Dorsolateral prefrontal cortex (tissue), 120 donors: ENCODE measurements at regions of chr10 and their contacts with region 1.

Region 1: DNA sequence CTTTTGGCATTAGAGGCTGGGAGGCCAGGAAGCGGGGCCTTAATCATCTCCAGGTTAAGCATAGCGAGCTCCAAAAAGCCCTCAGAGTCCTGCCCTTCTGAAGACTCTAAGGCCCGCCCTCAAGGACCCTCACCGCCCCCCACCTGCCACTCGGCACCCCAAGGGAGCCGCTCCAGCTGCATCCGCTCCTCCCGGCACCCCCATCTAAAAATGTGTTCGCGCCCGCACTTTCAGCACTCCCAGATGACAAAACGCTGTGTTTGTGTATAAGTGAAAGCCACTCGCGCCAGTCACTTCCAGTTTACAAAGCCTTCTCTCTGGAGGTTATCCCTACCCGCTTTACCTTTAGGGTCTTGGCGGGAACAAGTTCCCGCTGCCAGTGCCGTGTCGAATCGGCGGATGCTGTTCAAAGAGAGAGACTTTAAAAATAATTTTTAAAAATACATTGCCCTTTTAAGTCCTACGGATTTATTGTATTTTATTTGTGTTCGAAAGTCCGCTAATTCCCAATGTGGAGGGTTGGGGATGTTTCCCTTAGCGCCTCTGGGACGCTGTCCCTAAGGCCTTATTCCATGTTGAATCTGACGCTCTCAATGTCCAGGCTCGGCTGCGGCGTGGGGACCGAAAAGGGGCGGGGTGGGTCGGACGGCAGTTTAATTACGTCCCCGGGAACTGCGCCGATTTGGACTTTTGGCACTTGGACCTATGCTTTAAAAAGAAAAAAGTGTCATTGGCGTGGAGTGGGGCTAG is at the starts of genes DCLRE1A and NHLRC2:
- DNase-seq: peak; percentile 62 to 84 (median 78)
- H3K4me3 ChIP-seq: peak within 1 kb of the TSS; percentile 48 to 99 (median 91)
- H3K27ac ChIP-seq: peak within 1 kb of the TSS; percentile 71 to 97 (median 92)
- H3K27me3 ChIP-seq: no peaks in the 10 kb centered on the region
- CTCF ChIP-seq: peak in 10 of 56 donors; percentile 4 to 34 (median 12)
- total RNA-seq, gene DCLRE1A: 6.8 to 15.0 (median 10.1) TPM
- total RNA-seq, gene NHLRC2: 24.6 to 53.2 (median 33.8) TPM

Region 2: DNA sequence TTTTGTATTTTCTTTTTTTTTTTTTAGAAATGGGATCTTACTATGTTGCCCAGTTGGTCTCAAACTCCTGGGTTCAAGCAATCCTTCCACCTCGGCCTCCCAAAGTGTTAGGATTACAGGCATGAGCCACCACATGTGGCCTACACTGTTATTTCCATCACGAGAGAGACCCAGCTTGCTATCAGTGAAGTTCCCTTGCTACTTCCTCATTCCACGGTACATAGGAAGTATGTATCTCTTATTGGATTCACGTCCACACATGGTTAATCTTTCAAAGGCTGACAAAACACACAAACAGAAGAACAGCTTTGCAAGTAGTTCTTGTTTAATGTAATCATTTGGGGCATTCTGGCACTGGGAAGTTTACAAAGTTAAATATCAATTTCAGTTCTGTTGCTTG is 51.2 kb before region 1 on chr10:
- intact Hi-C with region 1: loop called in 1 of 2 experiments (anchors 5 kb)
- DNase-seq: no peak
- H3K4me3 ChIP-seq: no peak overlapping the region
- H3K27ac ChIP-seq: peak overlapping the region in 14 of 59 donors; percentile 3 to 64 (median 28)
- H3K27me3 ChIP-seq: no peaks in the 10 kb centered on the region
- CTCF ChIP-seq: no peak

Region 3: DNA sequence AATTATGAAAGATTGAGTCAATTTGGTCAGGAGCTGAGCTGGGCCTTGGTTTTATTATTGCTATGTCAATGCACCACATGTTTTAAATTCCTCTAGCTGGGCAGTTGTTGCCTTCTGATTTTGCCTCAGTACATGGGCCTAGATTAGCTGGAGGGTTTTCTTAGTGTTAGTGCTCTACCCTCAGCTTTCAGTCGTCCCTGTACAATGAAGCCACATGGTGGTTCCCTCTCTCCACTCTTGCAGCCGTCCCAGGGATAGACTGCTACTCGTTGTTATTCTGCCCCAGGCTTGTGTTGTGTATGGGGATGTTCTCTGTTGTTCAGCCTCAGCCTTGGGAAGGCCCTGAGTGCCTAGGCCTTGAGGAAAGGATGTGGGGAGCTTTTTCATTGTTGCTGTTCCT is 37.3 kb after region 1 on chr10:
- intact Hi-C with region 1: loop called in 1 of 2 experiments (anchors 5 kb)
- DNase-seq: peak in 4 of 10 donors; percentile 32 to 52 (median 40)
- H3K4me3 ChIP-seq: no peak overlapping the region
- H3K27ac ChIP-seq: peak overlapping the region in 47 of 59 donors; percentile 2 to 82 (median 61)
- H3K27me3 ChIP-seq: no peaks in the 10 kb centered on the region
- CTCF ChIP-seq: peak in 22 of 56 donors; percentile 7 to 59 (median 26)

Region 4: DNA sequence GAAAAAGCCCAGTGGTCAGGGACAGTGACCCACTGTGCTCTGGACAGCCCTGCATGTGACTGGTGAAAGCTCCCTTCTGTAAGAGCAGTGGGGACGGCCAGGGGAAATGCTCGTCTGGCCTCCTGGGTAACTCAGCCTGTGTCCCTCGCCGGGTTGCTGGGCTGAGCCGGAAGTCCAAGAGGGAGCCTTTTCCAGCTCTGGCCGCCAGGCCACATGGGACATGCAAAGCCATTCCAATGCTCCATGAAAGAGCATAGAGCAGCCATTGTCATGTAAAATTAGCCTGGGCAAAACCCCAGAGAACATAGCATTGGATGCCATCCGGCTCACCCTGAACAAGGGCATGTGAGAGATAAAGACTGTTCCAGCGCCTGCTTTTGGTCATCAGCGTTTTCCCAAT is 124.6 kb after region 1 on chr10:
- intact Hi-C with region 1: loop called in 1 of 2 experiments (anchors 5 kb)
- DNase-seq: peak in 9 of 10 donors; percentile 54 to 79 (median 71)
- H3K4me3 ChIP-seq: peak overlapping the region in 13 of 59 donors; percentile 1 to 37 (median 8)
- H3K27ac ChIP-seq: peak overlapping the region in 55 of 59 donors; percentile 8 to 92 (median 77)
- H3K27me3 ChIP-seq: no peaks in the 10 kb centered on the region
- CTCF ChIP-seq: peak in 10 of 56 donors; percentile 9 to 57 (median 27)

Region 5: GRCh38 chr10:114043532-114044246 is 189.5 kb after region 1 on chr10 and contains the start of gene ADRB1:
- intact Hi-C with region 1: loop called in 1 of 2 experiments (anchors 2 kb)
- DNase-seq: peak; percentile 62 to 93 (median 88)
- H3K4me3 ChIP-seq: peak within 1 kb of the TSS; percentile 37 to 75 (median 63)
- H3K27ac ChIP-seq: peak within 1 kb of the TSS in 57 of 59 donors; percentile 18 to 94 (median 84)
- H3K27me3 ChIP-seq: peaks cover 0 to 12% (median 0%) of the 10 kb centered on the region in 45 donors
- CTCF ChIP-seq: no peak
- total RNA-seq, gene ADRB1: 7.9 to 37.2 (median 21.1) TPM

Region 6: DNA sequence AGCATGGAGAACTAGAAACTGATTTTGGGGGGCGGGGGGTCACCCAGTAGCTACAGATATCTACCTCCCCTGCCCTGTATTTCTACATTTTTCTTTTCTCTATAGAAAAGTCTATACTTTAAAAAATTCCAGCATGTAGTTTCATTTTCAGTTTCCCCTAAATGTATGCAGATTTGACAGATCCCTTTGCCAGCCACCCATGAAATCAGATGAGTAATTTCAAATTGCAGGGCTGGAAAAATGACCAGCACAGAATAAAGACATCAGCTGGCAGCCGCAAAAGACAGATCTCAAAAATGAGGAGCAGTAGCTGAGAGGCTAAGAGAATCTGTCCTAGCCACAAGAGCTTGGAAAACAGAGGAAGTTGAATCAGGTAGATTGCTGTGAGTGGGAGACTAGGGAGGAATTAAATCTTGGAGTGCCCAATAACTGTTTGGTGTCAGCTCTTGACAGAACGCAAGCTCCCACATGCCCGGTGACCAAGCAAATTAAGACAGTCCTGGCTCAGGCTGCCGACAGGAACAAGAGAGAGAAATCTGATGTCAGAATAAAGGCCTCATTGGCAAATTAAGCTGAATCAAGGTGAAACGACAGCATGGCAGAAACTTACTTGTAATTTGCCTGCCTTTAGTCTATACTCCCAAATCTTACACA is 214.0 kb after region 1 on chr10:
- intact Hi-C with region 1: loop called in 1 of 2 experiments (anchors 10 kb)
- DNase-seq: peak in 2 of 10 donors; percentile 18 to 58
- H3K4me3 ChIP-seq: peak overlapping the region in 4 of 59 donors; percentile 0 to 14 (median 9)
- H3K27ac ChIP-seq: peak overlapping the region in 57 of 59 donors; percentile 8 to 91 (median 75)
- H3K27me3 ChIP-seq: no peaks in the 10 kb centered on the region
- CTCF ChIP-seq: no peak

Region 7: DNA sequence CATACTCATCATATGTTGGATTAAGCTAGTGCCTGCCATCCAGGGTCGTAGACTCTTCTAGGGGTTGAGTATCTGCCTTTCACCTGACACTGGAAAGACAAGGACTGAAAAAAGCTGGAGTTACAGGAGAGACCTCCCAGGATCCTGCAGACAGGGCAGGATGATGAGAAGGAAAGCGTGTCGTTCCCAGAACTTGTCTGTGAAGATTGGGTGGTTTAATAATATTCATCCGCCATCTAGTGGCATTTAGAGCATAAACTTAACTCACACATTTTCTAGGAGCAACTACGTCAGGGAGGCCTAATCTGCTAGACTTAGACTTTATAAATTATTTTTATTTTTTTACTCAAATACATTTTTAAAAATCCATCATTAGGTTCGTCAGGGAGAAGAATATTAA is 249.1 kb after region 1 on chr10:
- intact Hi-C with region 1: loop called in 1 of 2 experiments (anchors 5 kb)
- DNase-seq: peak in 1 of 10 donors; percentile 11
- H3K4me3 ChIP-seq: peak overlapping the region in 1 of 59 donors; percentile 7
- H3K27ac ChIP-seq: no peak overlapping the region
- H3K27me3 ChIP-seq: no peaks in the 10 kb centered on the region
- CTCF ChIP-seq: peak; percentile 48 to 91 (median 78)